ENCODE measurements at regions of chr16 and their contacts with region 1.

Region 1: DNA sequence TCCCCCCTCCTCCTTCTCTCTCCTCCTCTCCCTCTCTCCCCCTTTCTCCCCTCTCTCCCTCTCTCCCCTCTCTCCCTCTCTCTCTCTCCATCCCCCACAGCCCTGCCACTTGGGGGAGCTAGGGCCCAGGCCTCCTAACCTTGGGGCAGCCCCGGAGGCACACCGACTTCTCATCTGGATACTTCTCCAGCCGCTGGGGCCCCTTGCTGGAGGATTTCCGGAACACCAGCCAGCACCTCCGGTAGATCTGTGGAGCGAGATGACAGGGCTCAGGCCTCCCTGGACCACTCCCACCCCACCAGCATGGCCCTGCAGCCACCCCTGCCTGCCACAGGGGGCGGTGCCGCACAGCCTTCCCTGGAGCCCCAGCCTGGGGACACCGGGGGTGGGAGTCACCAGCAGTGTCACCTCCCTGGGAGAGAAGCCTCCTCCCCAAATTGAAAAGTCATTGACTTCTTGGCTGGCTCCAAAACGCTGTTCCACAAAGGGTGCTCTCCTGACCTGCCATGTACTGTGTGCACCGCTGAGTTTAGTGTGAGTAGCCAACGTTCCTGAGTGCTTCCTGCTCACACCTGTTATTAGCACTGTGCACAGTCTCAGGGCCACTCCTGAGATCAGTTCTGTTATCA is 10.5 kb downstream of the DOK4 start:
- DNase-seq: peak; percentile 77 to 91
- H3K4me3 ChIP-seq: peak overlapping the region in 1 of 4 experiments; percentile 42; a peak in 2 of 8 replicates
- H3K27ac ChIP-seq: no peak overlapping the region
- H3K4me1 ChIP-seq: peaks cover 10 to 66% (median 51%) of the 10 kb centered on the region in 4 experiments
- H3K27me3 ChIP-seq: no peaks in the 10 kb centered on the region; a peak in 1 of 7 replicates
- CTCF ChIP-seq: peak; percentile 69 to 97 (median 89)
- EP300 ChIP-seq: peak in 1 of 2 experiments; percentile 25; a peak in 1 of 3 replicates
- POLR2A ChIP-seq: no peak
- RAD21 ChIP-seq: peak; percentile 65 to 68

Region 2: GRCh38 chr16:57422026-57422944 is 53.5 kb before region 1 on chr16:
- CTCF ChIA-PET with region 1: interaction called, 14 read pairs
- POLR2A ChIA-PET with region 1: interaction called, 7 read pairs
- DNase-seq: peak in 1 of 2 experiments; percentile 60
- H3K4me3 ChIP-seq: no peak overlapping the region
- H3K27ac ChIP-seq: no peak overlapping the region
- H3K4me1 ChIP-seq: peaks cover 0 to 5% (median 1%) of the 10 kb centered on the region in 4 experiments; a peak in 3 of 7 replicates
- H3K27me3 ChIP-seq: no peaks in the 10 kb centered on the region
- CTCF ChIP-seq: peak; percentile 56 to 73 (median 61)
- EP300 ChIP-seq: no peak
- POLR2A ChIP-seq: no peak
- RAD21 ChIP-seq: peak; percentile 71 to 77

Region 3: DNA sequence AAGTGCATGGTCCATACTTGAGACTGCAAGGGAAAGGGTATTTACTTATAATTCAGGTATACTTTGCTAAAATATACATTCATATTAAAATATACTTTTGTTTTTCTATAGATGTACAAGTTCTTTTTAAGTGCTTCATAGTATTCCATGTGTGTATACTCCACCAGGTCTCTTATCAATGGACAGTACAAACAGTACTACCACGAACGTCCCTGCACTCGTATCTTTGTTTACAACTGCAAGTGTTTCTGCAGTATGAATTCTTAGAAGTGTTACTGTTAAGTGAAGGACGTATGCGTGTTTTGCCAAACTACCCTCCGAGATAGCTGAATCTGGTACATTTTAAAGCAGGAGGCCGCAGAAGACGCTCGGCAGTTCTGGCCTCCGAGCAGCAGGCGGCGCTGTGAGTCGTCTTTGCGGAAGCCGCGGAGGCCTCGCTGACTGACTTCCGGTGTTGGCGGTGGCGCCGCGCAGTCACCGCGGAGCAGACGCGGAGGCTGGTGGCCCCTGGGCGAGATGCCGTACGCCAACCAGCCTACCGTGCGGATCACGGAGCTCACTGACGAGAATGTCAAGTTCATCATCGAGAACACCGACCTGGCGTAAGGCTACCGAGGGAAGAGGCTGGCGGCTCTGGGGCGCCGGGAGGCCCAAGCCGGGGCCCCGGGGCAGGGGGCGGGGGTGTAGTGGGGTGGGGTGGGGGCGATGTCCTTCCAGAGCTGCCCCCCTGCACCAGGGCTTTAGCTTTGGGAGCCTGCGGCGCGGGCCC is 13.4 kb before region 1 on chr16 and contains the start of gene POLR2C:
- CTCF ChIA-PET with region 1: interaction called, 144 read pairs
- POLR2A ChIA-PET with region 1: interaction called, 30 read pairs
- DNase-seq: peak; percentile 60 to 95
- H3K4me3 ChIP-seq: peak within 1 kb of the TSS; percentile 93 to 97 (median 96)
- H3K27ac ChIP-seq: no peak within 1 kb of the TSS
- H3K4me1 ChIP-seq: no peaks in the 10 kb centered on the region; a peak in 2 of 7 replicates
- H3K27me3 ChIP-seq: no peaks in the 10 kb centered on the region
- CTCF ChIP-seq: peak; percentile 86 to 97 (median 94)
- EP300 ChIP-seq: peak in 1 of 2 experiments; percentile 51; a peak in 1 of 3 replicates
- POLR2A ChIP-seq: peak; percentile 96 to 97
- RAD21 ChIP-seq: peak; percentile 27 to 55; a peak in 3 of 4 replicates
- total RNA-seq, gene POLR2C: 71.2 and 72.5 TPM in 2 replicates

Region 4: DNA sequence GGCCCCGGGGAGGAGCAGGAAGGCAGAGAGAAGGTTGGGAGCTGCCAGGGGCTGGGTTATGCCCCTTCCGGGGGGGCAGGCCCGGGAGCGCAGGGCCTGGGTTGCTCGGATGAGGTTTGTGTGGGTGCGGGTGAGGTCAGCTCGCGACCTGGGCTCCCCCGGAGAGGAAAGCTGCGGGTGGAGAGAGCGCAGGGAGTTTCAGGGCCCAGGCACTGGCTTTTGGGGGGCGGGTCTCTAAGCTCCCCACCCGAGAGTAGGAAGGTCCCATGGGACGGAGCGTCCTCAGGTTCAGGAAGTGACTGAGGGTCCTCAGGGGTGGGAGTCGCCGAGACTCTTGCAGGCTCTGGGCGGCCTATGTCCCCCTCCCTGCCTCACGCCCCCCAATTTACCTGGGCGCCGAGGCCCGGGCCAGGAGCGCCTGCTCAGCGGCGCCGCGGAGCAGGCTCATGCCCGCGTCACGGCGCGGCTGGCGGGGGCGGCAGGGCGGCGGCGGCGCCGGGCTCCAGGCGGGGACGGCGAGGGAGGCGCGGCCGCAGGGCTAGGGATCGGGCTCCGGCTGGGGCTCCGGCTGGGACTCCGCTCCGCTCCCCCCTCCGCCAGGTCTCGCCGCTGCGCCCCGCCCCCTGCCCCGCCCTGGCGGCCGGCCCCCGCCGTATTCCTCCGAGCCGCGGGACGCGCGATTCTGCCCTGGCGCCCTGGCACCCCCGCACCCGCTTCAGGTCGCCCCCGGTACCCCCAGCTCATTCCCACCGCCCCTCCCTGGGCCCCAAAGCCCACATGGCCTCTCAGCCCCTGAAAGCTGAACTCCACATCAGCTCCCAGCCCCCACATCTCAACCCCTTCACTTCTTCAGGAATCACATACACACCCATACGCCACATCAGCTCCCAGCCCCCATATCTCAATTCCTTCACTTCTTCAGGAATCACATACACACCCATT is 10.4 kb after region 1 on chr16 and contains the start of gene DOK4:
- CTCF ChIA-PET with region 1: interaction called, 13 read pairs
- POLR2A ChIA-PET with region 1: interaction called, 8 read pairs
- DNase-seq: peak in 1 of 2 experiments; percentile 91
- H3K4me3 ChIP-seq: peak within 1 kb of the TSS; percentile 53 to 79 (median 72)
- H3K27ac ChIP-seq: no peak within 1 kb of the TSS
- H3K4me1 ChIP-seq: peaks cover 0 to 14% (median 10%) of the 10 kb centered on the region in 4 experiments; a peak in 6 of 7 replicates
- H3K27me3 ChIP-seq: peaks cover 0 to 12% (median 4%) of the 10 kb centered on the region in 4 experiments; a peak in 4 of 7 replicates
- CTCF ChIP-seq: no peak
- EP300 ChIP-seq: no peak
- POLR2A ChIP-seq: no peak
- RAD21 ChIP-seq: no peak
- total RNA-seq, gene DOK4: 28.9 and 29.9 TPM in 2 replicates

Region 5: GRCh38 chr16:57530104-57530521 is 54.3 kb after region 1 on chr16:
- CTCF ChIA-PET with region 1: interaction called, 210 read pairs
- POLR2A ChIA-PET with region 1: interaction called, 67 read pairs
- DNase-seq: no peak
- H3K4me3 ChIP-seq: peak overlapping the region in 2 of 4 experiments; percentile 1 to 73; a peak in 4 of 8 replicates
- H3K27ac ChIP-seq: no peak overlapping the region
- H3K4me1 ChIP-seq: peaks cover 4 to 40% (median 26%) of the 10 kb centered on the region in 4 experiments
- H3K27me3 ChIP-seq: peaks cover 0 to 13% (median 4%) of the 10 kb centered on the region in 4 experiments; a peak in 4 of 7 replicates
- CTCF ChIP-seq: no peak
- EP300 ChIP-seq: no peak
- POLR2A ChIP-seq: no peak
- RAD21 ChIP-seq: no peak